GM12878 (cell line): ENCODE measurements at regions of chr2 and their contacts with region 1.

Region 1: DNA sequence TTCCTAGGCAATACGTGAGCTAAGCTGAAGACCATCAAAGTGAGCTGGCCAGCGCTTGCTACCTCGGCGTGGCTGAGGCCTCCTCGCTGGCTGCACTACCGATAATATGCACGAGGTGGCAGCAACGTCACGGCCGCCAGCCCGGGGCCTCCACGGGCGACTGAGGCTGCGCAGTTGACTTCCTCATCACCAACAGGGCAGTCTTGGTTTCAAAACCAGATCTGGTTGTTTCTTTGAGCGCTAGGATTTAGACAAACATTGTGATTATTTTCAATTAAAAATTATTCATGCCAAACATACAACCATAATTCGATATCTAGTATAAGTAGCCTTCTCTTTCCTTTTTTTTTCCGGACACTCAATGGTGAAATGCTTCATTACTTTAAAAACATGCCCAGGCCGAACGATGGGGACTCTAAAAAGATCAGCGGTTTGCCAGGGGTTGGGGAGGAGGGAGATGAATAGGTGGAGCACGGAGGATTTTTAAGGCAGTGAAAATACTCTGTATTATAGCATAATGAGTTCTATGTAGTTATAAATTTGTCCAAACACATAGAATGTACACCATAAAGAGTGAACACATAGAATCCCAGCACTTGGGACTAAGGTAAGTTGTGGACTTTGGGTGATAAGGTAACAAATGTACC is 52.0 kb downstream of the CYBRD1 start:
- DNase-seq: peak; percentile 32
- ATAC-seq: peak; percentile 100
- H3K4me3 ChIP-seq: no peak overlapping the region
- H3K27ac ChIP-seq: no peak overlapping the region
- H3K4me1 ChIP-seq: no peaks in the 10 kb centered on the region
- H3K27me3 ChIP-seq: peaks cover 0 to 1% of the 10 kb centered on the region in 2 experiments; a peak in 1 of 4 replicates
- CTCF ChIP-seq: peak; percentile 94 to 97 (median 95); a peak in 5 of 6 replicates
- EP300 ChIP-seq: no peak
- POLR2A ChIP-seq: no peak
- RAD21 ChIP-seq: peak; percentile 81

Region 2: GRCh38 chr2:170973492-170974303 is 600.6 kb before region 1 on chr2:
- CTCF ChIA-PET with region 1: interaction called, 7 read pairs
- POLR2A ChIA-PET with region 1: no interaction called
- RAD21 ChIA-PET with region 1: no interaction called
- SMC1A ChIA-PET with region 1: interaction called, 6 read pairs
- in situ Hi-C with region 1: no loop called
- intact Hi-C with region 1: loop called (anchors 5 kb)
- DNase-seq: peak; percentile 64
- ATAC-seq: peak; percentile 97
- H3K4me3 ChIP-seq: peak overlapping the region; percentile 78
- H3K27ac ChIP-seq: peak overlapping the region; percentile 72
- H3K4me1 ChIP-seq: peaks cover 10% of the 10 kb centered on the region
- H3K27me3 ChIP-seq: no peaks in the 10 kb centered on the region
- CTCF ChIP-seq: peak; percentile 88 to 96 (median 89)
- EP300 ChIP-seq: peak in 1 of 2 experiments; percentile 40; a peak in 1 of 4 replicates
- POLR2A ChIP-seq: peak; percentile 74
- RAD21 ChIP-seq: peak; percentile 90

Region 3: DNA sequence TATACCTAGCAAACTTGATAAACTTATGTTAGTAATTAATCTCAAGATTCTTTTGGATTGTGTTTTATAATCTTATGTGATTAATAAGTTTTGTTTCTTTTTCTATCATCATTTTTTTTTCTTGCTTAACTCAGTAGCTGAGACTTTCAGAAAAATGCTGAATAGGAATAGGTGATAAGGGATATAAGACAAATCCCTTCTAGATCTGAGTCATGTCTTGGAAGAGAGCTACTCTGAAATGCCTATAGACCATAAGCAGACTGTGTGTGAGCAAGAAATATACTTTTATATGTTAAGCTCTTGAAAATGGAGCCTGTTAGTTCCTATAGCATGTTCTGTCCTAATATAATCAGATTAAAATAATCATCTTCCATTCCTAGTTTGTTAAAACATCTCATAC is 22.4 kb before region 1 on chr2:
- CTCF ChIA-PET with region 1: interaction called, 12 read pairs
- POLR2A ChIA-PET with region 1: no interaction called
- RAD21 ChIA-PET with region 1: interaction called, 3 read pairs
- SMC1A ChIA-PET with region 1: interaction called, 4 read pairs
- in situ Hi-C with region 1: no loop called
- intact Hi-C with region 1: no loop called
- DNase-seq: no peak
- ATAC-seq: no peak
- H3K4me3 ChIP-seq: no peak overlapping the region
- H3K27ac ChIP-seq: no peak overlapping the region
- H3K4me1 ChIP-seq: 0 out of 2 replicates have a peak, but pooled peaks cover 3% of the 10 kb centered on the region
- H3K27me3 ChIP-seq: no peaks in the 10 kb centered on the region
- CTCF ChIP-seq: no peak
- EP300 ChIP-seq: no peak
- POLR2A ChIP-seq: no peak
- RAD21 ChIP-seq: no peak

Region 4: DNA sequence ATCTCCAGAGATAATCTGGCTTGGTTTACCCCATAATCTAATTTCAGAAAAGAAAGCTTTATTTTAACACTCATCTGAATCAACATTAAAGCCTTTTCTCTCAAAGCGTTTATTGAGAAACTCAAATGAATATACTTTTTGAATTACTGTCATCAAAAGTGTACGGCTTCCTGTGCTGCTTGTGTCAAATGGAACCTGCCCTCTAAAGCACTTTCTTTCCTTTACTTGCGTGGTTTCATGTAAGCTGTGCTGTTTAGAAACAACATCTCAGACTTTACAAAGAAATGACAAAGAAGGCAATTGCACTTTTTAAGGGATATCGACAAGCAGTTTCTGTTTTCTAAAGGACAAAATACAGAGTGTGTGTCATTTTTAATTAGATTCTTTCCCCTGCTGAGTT is 16.9 kb before region 1 on chr2:
- CTCF ChIA-PET with region 1: interaction called, 23 read pairs
- POLR2A ChIA-PET with region 1: no interaction called
- RAD21 ChIA-PET with region 1: interaction called, 3 read pairs
- SMC1A ChIA-PET with region 1: interaction called, 9 read pairs
- in situ Hi-C with region 1: no loop called
- intact Hi-C with region 1: no loop called
- DNase-seq: no peak
- ATAC-seq: peak; percentile 66
- H3K4me3 ChIP-seq: no peak overlapping the region
- H3K27ac ChIP-seq: no peak overlapping the region
- H3K4me1 ChIP-seq: peaks cover 7% of the 10 kb centered on the region; the same call in 1 of the 2 replicates
- H3K27me3 ChIP-seq: no peaks in the 10 kb centered on the region
- CTCF ChIP-seq: no peak
- EP300 ChIP-seq: no peak
- POLR2A ChIP-seq: no peak
- RAD21 ChIP-seq: no peak

Region 5: GRCh38 chr2:171587567-171587966 is 13.3 kb after region 1 on chr2:
- CTCF ChIA-PET with region 1: interaction called, 7 read pairs
- POLR2A ChIA-PET with region 1: no interaction called
- RAD21 ChIA-PET with region 1: no interaction called
- SMC1A ChIA-PET with region 1: interaction called, 10 read pairs
- in situ Hi-C with region 1: no loop called
- intact Hi-C with region 1: no loop called
- DNase-seq: no peak
- ATAC-seq: no peak
- H3K4me3 ChIP-seq: no peak overlapping the region
- H3K27ac ChIP-seq: no peak overlapping the region
- H3K4me1 ChIP-seq: no peaks in the 10 kb centered on the region
- H3K27me3 ChIP-seq: no peaks in the 10 kb centered on the region; a peak in 1 of 4 replicates
- CTCF ChIP-seq: no peak
- EP300 ChIP-seq: no peak
- POLR2A ChIP-seq: no peak
- RAD21 ChIP-seq: no peak

Region 6: GRCh38 chr2:171615069-171615468 is 40.8 kb after region 1 on chr2:
- CTCF ChIA-PET with region 1: no interaction called
- POLR2A ChIA-PET with region 1: no interaction called
- RAD21 ChIA-PET with region 1: no interaction called
- SMC1A ChIA-PET with region 1: no interaction called
- in situ Hi-C with region 1: no loop called
- intact Hi-C with region 1: no loop called
- DNase-seq: no peak
- ATAC-seq: no peak
- H3K4me3 ChIP-seq: no peak overlapping the region
- H3K27ac ChIP-seq: no peak overlapping the region
- H3K4me1 ChIP-seq: no peaks in the 10 kb centered on the region
- H3K27me3 ChIP-seq: no peaks in the 10 kb centered on the region; a peak in 1 of 4 replicates
- CTCF ChIP-seq: no peak
- EP300 ChIP-seq: no peak
- POLR2A ChIP-seq: no peak
- RAD21 ChIP-seq: no peak